Motor neuron (in vitro differentiated cells): ENCODE measurements at regions of chr9 and their contacts with region 1.

Region 1: DNA sequence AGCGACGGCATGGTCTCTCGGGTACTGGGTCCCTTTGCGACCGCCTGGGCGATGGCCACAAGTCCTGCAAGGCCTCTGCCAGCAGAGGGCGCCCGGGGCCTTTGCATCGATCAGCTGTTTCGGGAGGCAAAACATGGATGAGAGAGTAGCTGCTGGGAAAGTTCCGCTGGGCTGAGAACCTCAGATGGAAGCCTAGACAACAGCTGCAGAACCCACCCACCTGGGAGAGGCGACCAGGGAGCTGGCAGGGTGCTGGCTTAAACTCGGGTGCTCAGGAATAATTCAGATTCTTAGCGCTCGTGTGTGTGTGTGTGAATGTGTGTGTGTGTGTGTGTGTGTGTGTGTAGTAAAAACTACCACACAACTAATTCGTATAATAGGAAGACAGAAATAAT is 50.0 kb downstream of the TRIM32 start:
- ATAC-seq: peak; percentile 87 to 98 (median 94)
- H3K4me3 ChIP-seq: no peak overlapping the region
- H3K27ac ChIP-seq: no peak overlapping the region
- H3K4me1 ChIP-seq: peaks cover 6 to 9% of the 10 kb centered on the region in 2 donors

Region 2: DNA sequence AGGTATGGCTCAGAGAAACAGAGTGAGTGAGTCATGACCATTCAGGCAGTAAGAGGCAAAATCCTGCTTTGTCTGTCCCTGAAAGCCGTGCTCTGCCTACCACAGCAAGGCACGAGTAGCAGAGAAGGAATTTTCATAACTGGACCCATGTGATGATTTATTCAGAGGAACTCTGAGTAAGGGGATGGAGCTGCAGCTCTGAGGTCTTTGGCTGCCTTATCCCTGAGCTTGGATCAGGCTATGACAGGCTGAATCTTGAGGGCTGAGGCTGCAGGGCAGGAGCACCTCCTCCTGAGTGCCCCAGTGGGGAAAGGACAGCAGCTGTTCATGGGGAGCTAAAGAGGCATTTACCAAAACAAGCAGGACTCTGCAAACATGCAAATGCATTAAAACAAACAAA is 400.1 kb before region 1 on chr9:
- in situ Hi-C with region 1: no loop called
- ATAC-seq: peak; percentile 18 to 97 (median 90)
- H3K4me3 ChIP-seq: no peak overlapping the region
- H3K27ac ChIP-seq: peak overlapping the region; percentile 33 to 37
- H3K4me1 ChIP-seq: peaks cover 50 to 67% of the 10 kb centered on the region in 2 donors

Region 3: DNA sequence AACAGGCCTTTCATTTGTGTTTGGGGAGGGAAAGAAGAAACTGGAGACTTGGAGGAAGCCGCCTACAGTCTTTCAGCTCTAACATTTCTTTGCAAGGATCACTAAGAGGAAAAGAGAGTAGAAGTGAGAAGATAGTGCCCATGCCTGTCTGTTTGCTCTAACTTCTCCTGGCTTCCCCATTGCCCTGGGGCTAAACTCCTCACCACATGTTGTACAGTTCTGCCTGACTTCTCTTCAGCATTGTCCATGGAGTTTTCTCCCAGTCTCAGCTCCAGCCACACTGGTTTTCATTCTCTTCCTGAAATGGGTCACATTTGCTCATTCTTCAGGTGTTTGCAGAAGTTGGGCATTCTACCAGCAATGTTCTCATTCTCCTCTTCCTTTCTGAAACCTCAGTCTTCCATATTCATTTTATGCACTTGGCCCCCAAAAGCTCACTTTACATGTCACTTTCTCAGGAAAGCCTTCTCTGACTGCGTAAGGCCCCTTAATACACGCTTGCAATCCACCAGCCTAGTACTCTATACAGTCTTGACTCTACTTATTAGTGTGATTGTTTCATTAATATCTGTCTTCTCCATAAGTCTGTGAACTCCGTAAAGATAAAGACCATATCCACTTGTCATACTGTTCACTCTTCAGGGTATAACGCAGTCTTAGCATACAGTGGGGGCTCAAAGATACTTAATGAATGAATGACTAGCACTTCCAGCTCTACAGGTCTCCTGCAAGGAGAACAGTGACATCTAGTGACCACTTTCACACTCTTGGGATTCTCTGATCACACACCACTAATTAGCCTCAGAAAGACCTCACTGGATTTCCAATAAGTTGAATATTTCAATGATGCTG is 90.3 kb before region 1 on chr9:
- in situ Hi-C with region 1: no loop called
- ATAC-seq: peak; percentile 53 to 95 (median 80)
- H3K4me3 ChIP-seq: no peak overlapping the region
- H3K27ac ChIP-seq: no peak overlapping the region
- H3K4me1 ChIP-seq: no peaks in the 10 kb centered on the region

Region 4: DNA sequence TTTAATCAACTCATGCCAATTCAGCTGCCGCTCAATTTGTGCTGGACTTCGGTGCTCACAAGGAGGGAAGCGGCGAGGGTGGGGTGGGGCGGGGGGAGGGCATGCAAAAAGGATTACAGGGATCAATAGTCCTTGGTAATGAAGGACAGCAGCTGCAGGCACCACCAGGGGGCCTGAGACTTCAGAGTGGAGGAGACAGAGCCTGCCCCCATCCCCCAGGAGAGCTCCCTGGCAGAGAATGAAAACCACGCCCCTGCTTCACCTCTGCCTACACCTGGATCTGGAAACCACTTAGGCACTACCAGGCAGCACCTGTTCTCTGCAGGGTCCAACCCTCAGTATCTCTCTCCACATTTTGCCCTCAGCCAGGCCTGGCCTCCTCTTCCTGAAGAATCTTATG is 105.5 kb after region 1 on chr9:
- in situ Hi-C with region 1: loop called in 1 of 9 experiments (anchors 10 kb)
- ATAC-seq: peak in 1 of 8 experiments; percentile 29
- H3K4me3 ChIP-seq: no peak overlapping the region
- H3K27ac ChIP-seq: no peak overlapping the region
- H3K4me1 ChIP-seq: peaks cover 2 to 6% of the 10 kb centered on the region in 2 donors

Region 5: GRCh38 chr9:116860509-116861120 is 123.5 kb after region 1 on chr9:
- in situ Hi-C with region 1: loop called in 4 of 9 experiments (anchors 5 to 25 kb)
- ATAC-seq: peak in 7 of 8 experiments; percentile 36 to 93 (median 67)
- H3K4me3 ChIP-seq: no peak overlapping the region
- H3K27ac ChIP-seq: no peak overlapping the region
- H3K4me1 ChIP-seq: peaks cover 0 to 3% of the 10 kb centered on the region in 2 donors

Region 6: GRCh38 chr9:116998305-116998704 is 261.2 kb after region 1 on chr9:
- in situ Hi-C with region 1: loop called in 1 of 9 experiments (anchors 25 kb)
- ATAC-seq: peak in 3 of 8 experiments; percentile 35 to 53 (median 37)
- H3K4me3 ChIP-seq: no peak overlapping the region
- H3K27ac ChIP-seq: no peak overlapping the region
- H3K4me1 ChIP-seq: no peaks in the 10 kb centered on the region